Mammary epithelial cell (primary cell): ENCODE measurements at regions of chr11 and their contacts with region 1.

Region 1: GRCh38 chr11:7892840-7893254 is 38.2 kb downstream of the OR10A6 start:
- DNase-seq: peak; percentile 49
- H3K4me3 ChIP-seq: no peak overlapping the region
- H3K27ac ChIP-seq: no peak overlapping the region
- H3K4me1 ChIP-seq: peaks cover 14% of the 10 kb centered on the region
- H3K27me3 ChIP-seq: no peaks in the 10 kb centered on the region
- CTCF ChIP-seq: peak; percentile 68 to 80

Region 2: GRCh38 chr11:7577291-7578190 is 315.3 kb before region 1 on chr11:
- CTCF ChIA-PET with region 1: no interaction called
- dilution Hi-C with region 1: no loop called
- in situ Hi-C with region 1: loop called in 1 of 2 experiments (anchors 25 kb)
- intact Hi-C with region 1: no loop called
- DNase-seq: no peak
- H3K4me3 ChIP-seq: no peak overlapping the region
- H3K27ac ChIP-seq: no peak overlapping the region
- H3K4me1 ChIP-seq: peaks cover 31% of the 10 kb centered on the region
- H3K27me3 ChIP-seq: no peaks in the 10 kb centered on the region
- CTCF ChIP-seq: no peak

Region 3: GRCh38 chr11:7904914-7905313 is 12.1 kb after region 1 on chr11:
- CTCF ChIA-PET with region 1: interaction called, 4 read pairs
- dilution Hi-C with region 1: no loop called
- in situ Hi-C with region 1: no loop called
- intact Hi-C with region 1: loop called (anchors 1 kb)
- DNase-seq: peak; percentile 47
- H3K4me3 ChIP-seq: peak overlapping the region; percentile 31 to 58 (median 51)
- H3K27ac ChIP-seq: peak overlapping the region; percentile 40
- H3K4me1 ChIP-seq: peaks cover 38% of the 10 kb centered on the region
- H3K27me3 ChIP-seq: no peaks in the 10 kb centered on the region
- CTCF ChIP-seq: peak; percentile 47 to 59

Region 4: DNA sequence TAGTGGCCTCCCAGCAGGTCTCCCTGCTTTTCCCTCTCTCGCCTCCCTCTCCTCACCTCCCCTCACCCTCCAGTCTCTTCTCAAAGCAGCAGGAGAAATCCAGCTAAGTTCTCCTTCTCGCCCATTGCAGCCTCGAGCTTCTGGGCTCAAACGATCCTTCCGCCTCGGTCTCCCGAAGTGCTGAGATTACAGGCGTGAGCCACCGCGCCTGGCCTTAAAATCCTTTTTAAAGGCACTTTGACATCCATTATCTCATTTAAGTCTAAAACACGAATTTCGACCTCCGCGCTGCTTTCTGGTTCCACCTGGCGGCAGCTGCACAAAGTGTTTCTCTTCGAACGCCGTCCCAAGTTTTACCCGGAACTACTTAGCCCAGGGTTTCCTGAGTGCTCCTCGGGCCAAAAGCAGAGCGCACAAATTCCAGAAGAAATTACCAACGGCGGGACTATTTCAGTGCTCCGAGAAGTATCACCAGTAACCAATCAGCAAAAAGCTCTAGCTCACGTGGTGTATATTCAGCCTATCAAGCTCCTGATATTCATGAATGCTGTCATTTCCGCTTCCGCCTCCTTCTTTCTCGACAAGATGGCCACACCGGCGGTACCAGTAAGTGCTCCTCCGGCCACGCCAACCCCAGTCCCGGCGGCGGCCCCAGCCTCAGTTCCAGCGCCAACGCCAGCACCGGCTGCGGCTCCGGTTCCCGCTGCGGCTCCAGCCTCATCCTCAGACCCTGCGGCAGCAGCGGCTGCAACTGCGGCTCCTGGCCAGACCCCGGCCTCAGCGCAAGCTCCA is 94.1 kb after region 1 on chr11 and contains the start of gene EIF3F:
- CTCF ChIA-PET with region 1: interaction called, 11 read pairs
- dilution Hi-C with region 1: no loop called
- in situ Hi-C with region 1: no loop called
- intact Hi-C with region 1: loop called (anchors 1 kb)
- DNase-seq: peak; percentile 98
- H3K4me3 ChIP-seq: peak within 1 kb of the TSS; percentile 68 to 98 (median 79)
- H3K27ac ChIP-seq: peak within 1 kb of the TSS; percentile 84
- H3K4me1 ChIP-seq: peaks cover 31% of the 10 kb centered on the region
- H3K27me3 ChIP-seq: no peaks in the 10 kb centered on the region
- CTCF ChIP-seq: peak; percentile 84 to 86
- total RNA-seq, gene EIF3F: 234 to 399 TPM

Region 5: DNA sequence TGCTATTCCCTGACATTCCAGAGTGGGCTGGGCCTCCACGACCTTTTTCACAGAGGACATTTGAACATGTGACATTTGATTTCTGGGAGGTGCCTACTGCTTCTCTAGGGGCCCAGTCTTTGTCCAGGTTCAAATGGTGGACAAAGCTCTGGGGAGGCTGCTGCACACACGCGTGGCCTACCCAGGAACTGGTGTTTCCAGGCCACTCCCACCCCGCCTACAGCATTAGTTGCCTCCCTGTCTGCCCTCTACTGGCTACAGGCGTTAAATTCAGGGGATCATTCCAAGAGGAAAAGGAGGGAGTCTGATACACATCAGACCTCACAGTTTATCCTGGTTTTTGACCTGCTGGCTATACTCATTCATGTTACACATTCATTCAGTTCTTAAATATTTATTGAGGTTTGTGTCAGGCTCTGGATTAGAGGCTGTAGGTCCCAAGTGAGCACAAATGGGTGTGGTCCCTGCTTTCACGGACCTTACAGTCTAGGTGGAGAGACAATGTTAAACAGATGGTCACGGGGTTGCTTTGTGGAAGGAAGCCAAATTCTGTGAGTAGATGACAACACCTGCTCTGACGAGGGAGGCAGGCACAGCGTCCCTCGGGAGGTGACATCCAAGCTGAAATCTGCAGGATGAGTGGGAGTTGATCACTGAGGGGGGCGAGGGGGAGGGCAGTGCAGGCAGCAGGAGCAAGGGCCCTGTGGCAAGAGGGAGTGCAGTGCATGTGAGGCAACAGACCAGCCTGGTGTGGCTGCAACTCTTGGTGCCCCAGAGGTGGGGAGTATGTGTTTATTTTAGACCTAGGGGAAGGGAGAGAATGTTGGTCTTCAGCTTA is 200.0 kb after region 1 on chr11:
- CTCF ChIA-PET with region 1: no interaction called
- dilution Hi-C with region 1: no loop called
- in situ Hi-C with region 1: no loop called
- intact Hi-C with region 1: loop called (anchors 5 kb)
- DNase-seq: peak; percentile 48
- H3K4me3 ChIP-seq: no peak overlapping the region
- H3K27ac ChIP-seq: no peak overlapping the region
- H3K4me1 ChIP-seq: no peaks in the 10 kb centered on the region
- H3K27me3 ChIP-seq: no peaks in the 10 kb centered on the region
- CTCF ChIP-seq: peak; percentile 80 to 84